Activated CD8-positive, alpha-beta T cell treated with anti-CD3 and anti-CD28 coated beads for 36 hours (primary cell): ENCODE measurements at regions of chr6 and their contacts with region 1.

Region 1: GRCh38 chr6:26285143-26286134 is 79.6 kb upstream of the BTN3A2 start:
- DNase-seq: peak; percentile 99
- ATAC-seq: peak; percentile 79
- H3K4me3 Mint-ChIP-seq: peak overlapping the region; percentile 88
- H3K27ac Mint-ChIP-seq: peak overlapping the region; percentile 100
- H3K4me1 Mint-ChIP-seq: peaks cover 15% of the 10 kb centered on the region
- H3K27me3 Mint-ChIP-seq: peaks cover 2% of the 10 kb centered on the region
- CTCF ChIP-seq: no peak

Region 2: DNA sequence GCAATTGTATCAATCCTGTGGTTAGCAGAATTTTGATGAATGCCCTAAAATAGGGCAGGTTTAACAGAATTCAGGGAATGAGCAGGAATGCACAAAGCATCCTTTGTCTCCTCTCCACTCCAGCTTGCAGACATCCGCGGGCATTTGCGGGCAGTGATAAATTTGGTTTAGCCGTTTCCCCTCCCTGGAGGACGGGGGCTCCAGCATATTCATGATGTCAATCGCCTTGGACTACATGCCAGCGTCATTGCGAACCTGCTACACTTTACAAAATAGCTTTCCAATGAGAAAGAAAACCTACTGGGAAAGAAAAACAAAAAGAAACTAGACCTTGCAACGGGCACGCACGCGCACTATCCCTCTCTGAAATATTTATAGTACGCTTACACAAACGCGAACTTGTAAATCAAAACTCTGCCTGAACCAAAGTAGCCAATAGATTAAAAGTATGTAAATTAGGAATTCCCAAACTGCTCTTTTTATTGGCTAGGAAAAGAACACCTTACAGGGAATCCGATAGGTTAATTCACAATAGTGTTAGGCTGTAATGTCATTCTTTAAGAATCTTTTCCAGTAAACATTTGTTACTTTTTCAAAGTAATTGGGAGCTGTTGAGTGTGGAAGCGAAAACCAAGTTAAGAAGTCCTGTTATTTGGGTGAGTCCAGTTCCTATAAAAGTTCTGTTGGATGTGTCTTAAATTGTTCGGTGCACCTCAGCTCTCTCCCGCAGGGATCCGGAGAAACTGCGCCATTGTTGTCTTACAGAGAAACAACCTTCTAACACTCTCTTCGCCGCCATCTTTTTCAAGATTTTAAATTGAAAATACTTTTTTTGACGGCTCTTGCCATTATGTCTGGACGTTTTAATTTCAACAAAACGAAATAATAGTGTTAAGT is 61.5 kb before region 1 on chr6:
- CTCF ChIA-PET with region 1: no interaction called
- POLR2A ChIA-PET with region 1: interaction called, 14 read pairs
- intact Hi-C with region 1: no loop called
- DNase-seq: peak; percentile 77
- ATAC-seq: peak; percentile 82
- H3K4me3 Mint-ChIP-seq: no peak overlapping the region
- H3K27ac Mint-ChIP-seq: no peak overlapping the region
- H3K4me1 Mint-ChIP-seq: peaks cover 14% of the 10 kb centered on the region
- H3K27me3 Mint-ChIP-seq: no peaks in the 10 kb centered on the region
- CTCF ChIP-seq: no peak

Region 3: DNA sequence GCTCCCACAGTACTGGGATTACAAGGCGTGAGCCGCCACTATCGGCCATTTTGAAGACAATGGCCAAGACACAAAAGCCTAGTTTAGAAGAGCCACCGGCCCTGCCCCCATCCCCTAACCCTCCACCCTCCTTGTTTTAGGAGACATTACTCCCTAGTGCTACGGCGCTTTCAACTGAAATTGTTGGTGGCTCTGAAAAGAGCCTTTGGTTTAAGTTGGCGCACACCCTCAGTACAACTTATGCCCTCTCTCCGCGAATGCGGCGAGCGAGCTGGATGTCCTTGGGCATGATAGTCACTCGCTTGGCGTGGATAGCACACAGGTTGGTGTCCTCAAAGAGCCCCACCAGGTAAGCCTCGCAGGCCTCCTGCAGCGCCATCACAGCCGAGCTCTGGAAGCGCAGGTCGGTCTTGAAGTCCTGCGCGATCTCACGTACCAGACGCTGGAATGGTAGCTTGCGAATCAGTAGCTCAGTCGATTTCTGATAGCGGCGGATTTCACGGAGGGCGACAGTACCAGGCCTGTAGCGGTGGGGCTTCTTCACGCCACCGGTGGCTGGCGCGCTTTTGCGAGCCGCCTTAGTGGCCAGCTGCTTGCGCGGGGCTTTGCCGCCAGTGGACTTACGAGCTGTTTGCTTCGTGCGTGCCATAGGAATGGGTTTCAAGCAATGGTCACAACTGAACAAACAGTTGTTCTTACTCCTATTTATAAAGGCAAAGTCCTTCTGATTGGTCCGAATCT is 35.3 kb before region 1 on chr6:
- CTCF ChIA-PET with region 1: interaction called, 10 read pairs
- POLR2A ChIA-PET with region 1: interaction called, 7 read pairs
- intact Hi-C with region 1: no loop called
- DNase-seq: peak; percentile 84
- ATAC-seq: peak; percentile 68
- H3K4me3 Mint-ChIP-seq: peak overlapping the region; percentile 82
- H3K27ac Mint-ChIP-seq: peak overlapping the region; percentile 99
- H3K4me1 Mint-ChIP-seq: peaks cover 27% of the 10 kb centered on the region
- H3K27me3 Mint-ChIP-seq: no peaks in the 10 kb centered on the region
- CTCF ChIP-seq: peak; percentile 43

Region 4: GRCh38 chr6:26304797-26305640 is 19.6 kb after region 1 on chr6:
- CTCF ChIA-PET with region 1: interaction called, 5 read pairs
- POLR2A ChIA-PET with region 1: interaction called, 23 read pairs
- intact Hi-C with region 1: no loop called
- DNase-seq: peak; percentile 80
- ATAC-seq: peak; percentile 62
- H3K4me3 Mint-ChIP-seq: peak overlapping the region; percentile 71
- H3K27ac Mint-ChIP-seq: peak overlapping the region; percentile 84
- H3K4me1 Mint-ChIP-seq: peaks cover 51% of the 10 kb centered on the region
- H3K27me3 Mint-ChIP-seq: no peaks in the 10 kb centered on the region
- CTCF ChIP-seq: no peak

Region 5: GRCh38 chr6:26351544-26351953 is 66.1 kb after region 1 on chr6:
- CTCF ChIA-PET with region 1: no interaction called
- POLR2A ChIA-PET with region 1: no interaction called
- intact Hi-C with region 1: no loop called
- DNase-seq: no peak
- ATAC-seq: no peak
- H3K4me3 Mint-ChIP-seq: no peak overlapping the region
- H3K27ac Mint-ChIP-seq: no peak overlapping the region
- H3K4me1 Mint-ChIP-seq: no peaks in the 10 kb centered on the region
- H3K27me3 Mint-ChIP-seq: no peaks in the 10 kb centered on the region
- CTCF ChIP-seq: no peak

Region 6: GRCh38 chr6:26366504-26366903 is 81.1 kb after region 1 on chr6:
- CTCF ChIA-PET with region 1: no interaction called
- POLR2A ChIA-PET with region 1: no interaction called
- intact Hi-C with region 1: no loop called
- DNase-seq: no peak
- ATAC-seq: no peak
- H3K4me3 Mint-ChIP-seq: no peak overlapping the region
- H3K27ac Mint-ChIP-seq: peak overlapping the region; percentile 76
- H3K4me1 Mint-ChIP-seq: peaks cover 62% of the 10 kb centered on the region
- H3K27me3 Mint-ChIP-seq: no peaks in the 10 kb centered on the region
- CTCF ChIP-seq: no peak